ENCODE measurements at regions of chr1 and their contacts with region 1.

Region 1: DNA sequence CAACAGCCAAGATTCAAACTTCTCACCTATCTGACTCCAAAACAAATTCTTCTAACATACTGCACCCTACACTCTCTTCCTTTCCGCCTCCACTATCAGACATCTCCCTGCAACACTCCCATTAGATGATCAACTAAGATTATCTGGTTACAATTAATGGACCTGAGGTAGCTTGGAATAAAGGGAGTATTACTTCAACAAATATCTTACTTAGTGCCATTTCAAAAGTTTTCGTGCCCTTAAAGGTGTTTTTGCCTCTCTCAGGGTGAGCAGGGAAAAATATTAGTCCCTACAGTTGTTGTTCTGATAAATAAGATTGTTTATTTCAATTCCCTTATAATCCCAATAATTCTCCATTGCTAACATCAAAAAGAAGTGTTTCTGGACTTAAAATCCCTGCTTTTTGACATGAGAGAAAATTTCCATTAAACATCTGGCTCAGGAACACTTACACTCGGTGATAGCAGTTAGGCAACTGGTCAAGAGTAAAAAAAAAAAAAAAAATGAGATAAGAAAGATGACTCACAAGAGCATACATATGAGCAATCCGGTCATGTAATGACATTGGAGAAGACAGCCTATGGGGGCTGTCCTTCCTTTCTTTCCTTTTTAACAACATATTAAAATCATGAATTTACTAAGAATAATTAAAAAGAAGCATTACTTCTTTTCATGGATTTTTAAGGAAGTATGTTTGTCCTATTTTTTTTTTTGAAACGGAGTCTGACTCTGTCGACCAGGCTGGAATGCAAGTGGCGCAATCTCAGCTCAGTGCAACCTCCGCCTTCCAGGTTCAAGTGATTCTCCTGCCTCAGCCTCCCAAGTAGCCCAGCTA is 7.6 kb downstream of the RSBN1 start:
- DNase-seq: peak; percentile 65
- ATAC-seq: peak; percentile 79
- H3K4me3 ChIP-seq: no peak overlapping the region
- H3K27ac ChIP-seq: no peak overlapping the region
- H3K4me1 ChIP-seq: peaks cover 26% of the 10 kb centered on the region
- H3K27me3 ChIP-seq: no peaks in the 10 kb centered on the region
- CTCF ChIP-seq: no peak

Region 2: GRCh38 chr1:113792986-113793385 is 11.7 kb before region 1 on chr1:
- CTCF ChIA-PET with region 1: no interaction called
- POLR2A ChIA-PET with region 1: interaction called, 11 read pairs
- intact Hi-C with region 1: no loop called
- DNase-seq: peak; percentile 87
- ATAC-seq: peak; percentile 91
- H3K4me3 ChIP-seq: peak overlapping the region; percentile 10; the same call in 1 of the 2 replicates
- H3K27ac ChIP-seq: peak overlapping the region; percentile 45
- H3K4me1 ChIP-seq: peaks cover 22% of the 10 kb centered on the region
- H3K27me3 ChIP-seq: no peaks in the 10 kb centered on the region
- CTCF ChIP-seq: no peak

Measured in PC-3 (cell line).